WTC11 (cell line): ENCODE measurements at regions of chr15 and their contacts with region 1.

Region 1: GRCh38 chr15:65077981-65078352 is 1.4 kb downstream of the KBTBD13 start:
- DNase-seq: peak; percentile 86
- ATAC-seq: peak; percentile 75
- H3K4me3 Mint-ChIP-seq: no peak overlapping the region
- H3K27ac Mint-ChIP-seq: no peak overlapping the region
- H3K4me1 Mint-ChIP-seq: peaks cover 32% of the 10 kb centered on the region
- H3K27me3 Mint-ChIP-seq: peaks cover 12% of the 10 kb centered on the region
- CTCF ChIP-seq: no peak

Region 2: DNA sequence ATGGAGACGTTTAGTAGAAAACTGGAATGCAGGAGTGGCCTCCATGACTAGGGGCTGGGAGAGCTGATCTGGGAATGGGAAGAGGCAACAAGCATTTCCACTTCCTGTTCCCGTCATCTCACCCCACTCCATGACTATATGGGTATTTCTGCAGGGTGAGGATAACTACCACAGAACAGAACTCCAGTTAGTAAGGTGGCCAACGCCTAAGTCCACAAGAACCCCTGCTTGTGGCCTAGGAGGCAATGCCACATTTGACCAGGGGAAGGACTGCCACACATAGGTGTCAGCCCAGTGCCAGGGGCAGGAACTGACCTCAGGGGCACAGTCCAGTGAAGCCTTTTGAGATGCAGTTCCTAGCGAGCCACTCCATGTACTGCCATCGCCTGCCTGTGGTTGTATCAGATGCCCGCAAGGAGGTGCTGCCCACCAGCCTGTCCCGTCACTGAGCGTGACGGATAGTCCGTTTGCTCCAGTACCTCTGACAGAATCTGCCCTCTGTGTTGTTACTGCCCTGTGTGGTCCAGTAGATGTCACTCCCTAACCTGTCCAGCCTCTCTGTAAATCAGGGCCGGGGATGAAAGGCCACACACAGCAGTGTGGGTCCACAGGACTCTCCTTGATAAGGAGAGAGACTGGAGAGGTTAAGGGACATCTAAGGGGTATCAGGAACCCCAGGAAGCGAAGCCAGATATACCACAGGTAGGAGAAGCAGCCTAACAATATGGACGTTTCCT is 45.0 kb before region 1 on chr15:
- CTCF ChIA-PET with region 1: interaction called, 32 read pairs
- POLR2A ChIA-PET with region 1: no interaction called
- DNase-seq: peak; percentile 83
- ATAC-seq: peak; percentile 86
- H3K4me3 Mint-ChIP-seq: peak overlapping the region; percentile 14; the same call in 1 of the 2 replicates
- H3K27ac Mint-ChIP-seq: no peak overlapping the region
- H3K4me1 Mint-ChIP-seq: peaks cover 18% of the 10 kb centered on the region
- H3K27me3 Mint-ChIP-seq: peaks cover 6% of the 10 kb centered on the region
- CTCF ChIP-seq: peak; percentile 51

Region 3: GRCh38 chr15:65054333-65055200 is 23.4 kb before region 1 on chr15:
- CTCF ChIA-PET with region 1: interaction called, 193 read pairs
- POLR2A ChIA-PET with region 1: interaction called, 7 read pairs
- DNase-seq: peak; percentile 86
- ATAC-seq: peak; percentile 82
- H3K4me3 Mint-ChIP-seq: no peak overlapping the region
- H3K27ac Mint-ChIP-seq: no peak overlapping the region
- H3K4me1 Mint-ChIP-seq: peaks cover 4% of the 10 kb centered on the region; the same call in 1 of the 2 replicates
- H3K27me3 Mint-ChIP-seq: peaks cover 2% of the 10 kb centered on the region; the same call in 1 of the 2 replicates
- CTCF ChIP-seq: peak; percentile 83

Region 4: DNA sequence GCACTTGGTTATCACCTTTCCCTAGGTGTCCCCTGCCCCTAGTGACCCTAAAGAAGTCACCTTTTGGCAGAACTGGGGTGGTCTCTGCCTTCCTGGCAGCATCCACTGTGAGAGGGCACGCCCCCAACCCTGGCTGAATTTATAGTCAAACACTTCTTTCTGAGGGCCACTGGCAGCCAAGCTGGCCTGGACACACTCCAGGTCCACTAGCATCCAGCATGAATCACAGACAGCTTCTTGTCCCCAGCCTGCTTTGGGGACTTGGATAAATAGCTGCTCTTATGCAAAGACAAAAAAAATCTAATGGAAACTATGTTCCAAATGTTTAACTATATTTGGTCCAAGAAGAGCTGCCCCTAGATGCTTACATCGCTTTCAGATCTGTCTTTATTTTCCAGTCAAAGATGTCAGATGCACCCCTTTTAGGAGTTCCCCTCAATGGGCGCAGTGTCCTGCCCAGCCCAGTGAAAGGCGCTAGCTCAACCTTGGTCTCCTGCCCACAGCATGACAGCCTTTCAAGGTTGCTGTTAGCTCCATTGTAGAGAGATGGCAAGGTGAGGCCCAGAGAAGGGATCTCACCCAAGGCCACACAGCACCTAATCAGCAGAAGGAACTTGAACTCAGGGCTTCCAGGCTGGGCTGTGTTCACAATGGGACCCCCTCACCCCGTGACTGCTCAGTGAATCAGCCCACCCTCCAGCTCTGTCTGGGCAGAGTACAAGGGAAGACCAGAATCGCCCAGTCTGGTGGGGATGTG is 17.1 kb before region 1 on chr15:
- CTCF ChIA-PET with region 1: interaction called, 193 read pairs
- POLR2A ChIA-PET with region 1: interaction called, 11 read pairs
- DNase-seq: no peak
- ATAC-seq: no peak
- H3K4me3 Mint-ChIP-seq: no peak overlapping the region
- H3K27ac Mint-ChIP-seq: no peak overlapping the region
- H3K4me1 Mint-ChIP-seq: peaks cover 8% of the 10 kb centered on the region
- H3K27me3 Mint-ChIP-seq: no peaks in the 10 kb centered on the region
- CTCF ChIP-seq: no peak

Region 5: DNA sequence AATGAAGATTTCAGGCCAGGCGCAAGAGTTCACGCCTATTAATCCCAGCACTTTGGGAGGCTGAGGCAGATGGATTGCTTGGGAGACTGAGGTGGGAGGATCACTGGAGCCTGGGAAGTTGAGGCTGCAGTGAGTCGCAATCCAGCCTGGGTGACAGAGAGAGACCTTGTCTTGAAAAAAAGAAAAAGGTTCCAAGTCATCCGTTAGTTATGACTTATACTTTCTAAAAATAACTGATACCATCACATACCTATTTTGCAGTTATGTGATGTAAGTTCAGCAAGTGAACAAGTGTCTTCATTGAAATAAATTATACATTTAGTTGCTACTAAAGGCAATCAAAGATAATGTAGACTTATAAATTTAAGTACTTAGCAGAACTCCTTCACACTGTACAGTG is 85.1 kb after region 1 on chr15:
- CTCF ChIA-PET with region 1: no interaction called
- POLR2A ChIA-PET with region 1: no interaction called
- DNase-seq: no peak
- ATAC-seq: no peak
- H3K4me3 Mint-ChIP-seq: no peak overlapping the region
- H3K27ac Mint-ChIP-seq: no peak overlapping the region
- H3K4me1 Mint-ChIP-seq: no peaks in the 10 kb centered on the region
- H3K27me3 Mint-ChIP-seq: no peaks in the 10 kb centered on the region
- CTCF ChIP-seq: no peak